ENCODE measurements at regions of chr5 and their contacts with region 1.

Region 1: GRCh38 chr5:17204133-17204489 is 13.3 kb upstream of the BASP1 start:
- DNase-seq: no peak
- H3K4me3 ChIP-seq: no peak overlapping the region
- CTCF ChIP-seq: no peak

Region 2: GRCh38 chr5:16784843-16785791 is 419.0 kb before region 1 on chr5:
- CTCF ChIA-PET with region 1: interaction called, 13 read pairs
- POLR2A ChIA-PET with region 1: no interaction called
- DNase-seq: no peak
- H3K4me3 ChIP-seq: no peak overlapping the region
- CTCF ChIP-seq: no peak

Region 3: DNA sequence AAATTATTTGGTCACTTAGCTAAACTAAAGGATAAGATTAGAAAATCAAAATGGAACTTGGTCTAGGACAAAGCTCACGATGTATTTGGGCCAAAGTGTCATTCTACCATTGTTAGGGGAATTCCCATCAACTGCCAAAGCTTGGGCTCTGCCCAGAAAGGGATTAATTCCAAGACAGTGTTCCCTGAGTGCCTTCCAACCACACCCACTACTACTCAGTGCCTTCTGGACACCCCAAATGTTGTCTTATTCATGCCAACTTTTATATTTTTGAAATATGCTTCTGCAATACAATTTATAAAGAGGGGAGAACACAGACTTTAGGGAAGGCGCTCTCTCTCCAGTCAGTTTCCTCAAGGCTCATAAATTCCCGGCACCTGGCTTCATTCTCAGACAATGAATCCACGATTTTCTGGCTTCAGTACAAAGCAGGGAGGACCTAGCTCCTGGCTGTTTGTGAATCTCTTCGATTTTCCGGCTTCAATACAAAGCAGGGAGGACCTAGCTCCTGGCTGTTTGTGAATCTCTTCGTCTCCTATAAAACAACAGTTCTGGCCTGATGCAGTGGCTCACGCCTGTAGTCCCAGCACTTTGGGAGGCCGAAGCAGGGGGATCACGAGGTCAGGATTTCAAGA is 147.9 kb before region 1 on chr5:
- CTCF ChIA-PET with region 1: no interaction called
- POLR2A ChIA-PET with region 1: no interaction called
- DNase-seq: no peak
- H3K4me3 ChIP-seq: no peak overlapping the region
- CTCF ChIP-seq: no peak

Region 4: DNA sequence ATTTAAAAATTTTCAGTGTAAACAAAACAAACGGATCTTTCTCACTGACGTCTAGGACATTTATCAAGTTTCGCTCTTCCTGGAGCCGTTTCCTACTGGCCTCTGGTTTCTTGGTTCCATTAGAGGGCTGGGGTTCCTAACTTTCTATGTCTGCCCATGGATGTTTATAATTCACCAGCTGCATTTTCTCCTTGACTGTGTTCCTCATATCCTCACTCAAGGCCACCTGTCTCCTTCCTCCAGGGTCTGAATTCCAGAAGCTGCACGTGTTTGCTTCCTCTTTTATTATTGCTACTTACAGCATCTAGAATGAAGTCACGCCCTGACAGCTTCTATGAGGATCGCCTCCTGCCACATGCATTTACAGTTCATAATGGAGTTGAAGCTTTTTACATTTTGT is 60.8 kb before region 1 on chr5:
- CTCF ChIA-PET with region 1: no interaction called
- POLR2A ChIA-PET with region 1: no interaction called
- DNase-seq: no peak
- H3K4me3 ChIP-seq: no peak overlapping the region
- CTCF ChIP-seq: no peak

Region 5: GRCh38 chr5:17221843-17222636 is 17.9 kb after region 1 on chr5:
- CTCF ChIA-PET with region 1: no interaction called
- POLR2A ChIA-PET with region 1: no interaction called
- DNase-seq: no peak
- H3K4me3 ChIP-seq: 0 out of 2 replicates have a peak overlapping the region, but pooled peaks have one; percentile 9
- CTCF ChIP-seq: no peak

Region 6: GRCh38 chr5:18305297-18305924 is 1101.3 kb after region 1 on chr5:
- CTCF ChIA-PET with region 1: interaction called, 10 read pairs
- POLR2A ChIA-PET with region 1: no interaction called
- DNase-seq: no peak
- H3K4me3 ChIP-seq: no peak overlapping the region
- CTCF ChIP-seq: peak; percentile 73

Measured in AG04449 (cell line).